K562 (cell line): ENCODE measurements at regions of chr1 and their contacts with region 1.

Region 1: DNA sequence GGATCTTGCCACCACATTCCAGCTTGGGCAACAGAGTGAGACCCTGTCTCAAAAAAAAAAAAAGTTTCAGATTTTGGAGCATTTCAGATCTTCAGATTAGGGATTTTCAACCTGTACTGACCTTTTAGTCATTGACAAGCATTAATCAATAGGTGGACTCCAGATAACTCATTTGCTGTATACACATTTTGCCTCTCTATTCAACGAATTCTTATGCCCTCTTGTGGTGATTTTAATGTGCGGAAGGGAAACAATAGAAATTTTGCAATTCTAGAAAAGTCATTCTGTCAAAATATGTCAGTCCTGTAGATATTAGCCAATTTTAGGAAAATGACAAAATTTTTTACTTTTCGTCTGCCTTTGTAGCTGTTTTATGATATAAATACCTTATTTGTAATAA is 11.7 kb upstream of the OR2G2 start:
- DNase-seq: peak in 1 of 4 experiments; percentile 18
- ATAC-seq: 0 out of 3 replicates have a peak, but pooled peaks have one; percentile 34
- H3K4me3 ChIP-seq: no peak overlapping the region
- H3K27ac ChIP-seq: no peak overlapping the region
- H3K4me1 ChIP-seq: no peaks in the 10 kb centered on the region
- H3K27me3 ChIP-seq: no peaks in the 10 kb centered on the region
- CTCF ChIP-seq: peak; percentile 33 to 60 (median 34); a peak in 4 of 6 replicates
- EP300 ChIP-seq: no peak
- POLR2A ChIP-seq: no peak
- RAD21 ChIP-seq: peak; percentile 71 to 79

Region 2: DNA sequence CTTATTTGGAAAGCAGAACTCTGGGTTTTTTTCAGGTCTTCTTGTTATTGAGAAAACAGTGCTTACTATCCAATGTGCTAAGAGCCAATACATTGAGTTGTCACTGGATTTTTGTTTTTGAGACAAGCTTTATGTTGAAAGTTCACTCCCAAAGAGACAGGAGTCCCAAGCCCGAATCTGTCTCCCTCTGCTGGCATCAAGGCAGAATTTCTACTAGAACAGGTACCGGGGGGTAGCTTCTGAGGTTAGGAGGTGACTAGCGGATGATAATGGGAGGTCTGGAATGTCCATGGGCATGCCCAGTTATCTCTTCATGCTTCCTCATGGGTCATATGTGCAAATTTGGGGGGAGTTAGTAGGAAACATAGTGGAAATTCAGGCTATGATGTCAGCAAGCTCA is 429.8 kb before region 1 on chr1:
- CTCF ChIA-PET with region 1: no interaction called
- POLR2A ChIA-PET with region 1: no interaction called
- in situ Hi-C with region 1: no loop called
- intact Hi-C with region 1: no loop called
- DNase-seq: peak; percentile 28 to 61 (median 45)
- ATAC-seq: peak; percentile 59; the same call in 2 of the 3 replicates
- H3K4me3 ChIP-seq: no peak overlapping the region
- H3K27ac ChIP-seq: no peak overlapping the region
- H3K4me1 ChIP-seq: no peaks in the 10 kb centered on the region
- H3K27me3 ChIP-seq: no peaks in the 10 kb centered on the region
- CTCF ChIP-seq: peak; percentile 24 to 39 (median 30); a peak in 5 of 6 replicates
- EP300 ChIP-seq: no peak
- POLR2A ChIP-seq: no peak
- RAD21 ChIP-seq: peak in 1 of 2 experiments; percentile 26; a peak in 1 of 4 replicates

Region 3: DNA sequence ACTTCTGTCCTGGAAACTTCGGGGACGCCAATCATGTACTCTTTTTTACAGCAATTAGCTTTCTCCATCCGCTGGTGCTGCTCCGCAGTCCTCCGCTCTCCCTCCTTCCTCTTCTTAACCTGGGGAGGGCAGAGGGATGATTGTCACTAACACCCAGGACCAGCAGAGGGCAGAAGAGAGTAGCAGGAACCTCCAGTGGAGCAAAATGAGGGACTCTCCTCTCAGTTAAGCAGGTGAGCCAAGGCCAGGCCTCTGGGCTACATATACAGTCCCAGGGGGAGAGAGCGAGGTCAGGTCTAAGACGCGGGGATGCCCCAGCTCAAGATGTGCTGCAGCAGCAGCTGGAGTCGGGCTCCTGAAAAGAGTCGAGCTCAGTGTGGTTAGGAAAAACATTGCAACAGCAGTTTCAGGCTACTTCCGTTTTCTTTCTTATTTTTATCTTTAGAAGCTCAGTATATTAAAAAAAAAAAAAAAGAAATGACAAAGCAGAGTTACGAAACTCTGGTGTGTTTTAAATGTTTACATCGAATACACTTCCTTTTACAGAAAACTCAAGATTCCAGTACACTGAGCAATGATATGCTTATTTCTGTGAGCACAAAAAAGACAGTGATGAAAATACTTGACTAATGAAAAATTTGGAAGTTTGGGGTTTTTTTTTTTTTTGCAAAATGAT is 186.2 kb before region 1 on chr1:
- CTCF ChIA-PET with region 1: no interaction called
- POLR2A ChIA-PET with region 1: no interaction called
- in situ Hi-C with region 1: no loop called
- intact Hi-C with region 1: loop called (anchors 2 kb)
- DNase-seq: peak; percentile 89 to 90 (median 90)
- ATAC-seq: peak; percentile 98
- H3K4me3 ChIP-seq: no peak overlapping the region
- H3K27ac ChIP-seq: no peak overlapping the region
- H3K4me1 ChIP-seq: peaks cover 0 to 5% of the 10 kb centered on the region in 2 experiments; a peak in 2 of 5 replicates
- H3K27me3 ChIP-seq: peaks cover 0 to 5% of the 10 kb centered on the region in 2 experiments; a peak in 1 of 5 replicates
- CTCF ChIP-seq: peak; percentile 92 to 95 (median 95)
- EP300 ChIP-seq: 0 out of 2 replicates have a peak, but pooled peaks have one; percentile 5
- POLR2A ChIP-seq: no peak
- RAD21 ChIP-seq: peak; percentile 87 to 88